Activated B cell treated with CpG ODN at 0.5 μM for 24 hours (primary cell): ENCODE measurements at regions of chr1 and their contacts with region 1.

Region 1: GRCh38 chr1:185317034-185317885 is at the start of gene IVNS1ABP:
- DNase-seq: peak; percentile 90
- ATAC-seq: peak; percentile 73
- H3K4me3 Mint-ChIP-seq: peak within 1 kb of the TSS; percentile 97
- H3K27ac Mint-ChIP-seq: peak within 1 kb of the TSS; percentile 98
- H3K4me1 Mint-ChIP-seq: peaks cover 49% of the 10 kb centered on the region
- H3K27me3 Mint-ChIP-seq: no peaks in the 10 kb centered on the region
- CTCF ChIP-seq: no peak
- total RNA-seq, gene IVNS1ABP: 130 and 149 TPM in 2 replicates

Region 2: GRCh38 chr1:184973272-184974055 is 343.8 kb before region 1 on chr1:
- CTCF ChIA-PET with region 1: no interaction called
- POLR2A ChIA-PET with region 1: no interaction called
- intact Hi-C with region 1: loop called (anchors 2 kb)
- DNase-seq: peak; percentile 61
- ATAC-seq: peak; percentile 51
- H3K4me3 Mint-ChIP-seq: peak overlapping the region; percentile 93
- H3K27ac Mint-ChIP-seq: peak overlapping the region; percentile 91
- H3K4me1 Mint-ChIP-seq: peaks cover 59% of the 10 kb centered on the region
- H3K27me3 Mint-ChIP-seq: peaks cover 2% of the 10 kb centered on the region
- CTCF ChIP-seq: no peak

Region 3: DNA sequence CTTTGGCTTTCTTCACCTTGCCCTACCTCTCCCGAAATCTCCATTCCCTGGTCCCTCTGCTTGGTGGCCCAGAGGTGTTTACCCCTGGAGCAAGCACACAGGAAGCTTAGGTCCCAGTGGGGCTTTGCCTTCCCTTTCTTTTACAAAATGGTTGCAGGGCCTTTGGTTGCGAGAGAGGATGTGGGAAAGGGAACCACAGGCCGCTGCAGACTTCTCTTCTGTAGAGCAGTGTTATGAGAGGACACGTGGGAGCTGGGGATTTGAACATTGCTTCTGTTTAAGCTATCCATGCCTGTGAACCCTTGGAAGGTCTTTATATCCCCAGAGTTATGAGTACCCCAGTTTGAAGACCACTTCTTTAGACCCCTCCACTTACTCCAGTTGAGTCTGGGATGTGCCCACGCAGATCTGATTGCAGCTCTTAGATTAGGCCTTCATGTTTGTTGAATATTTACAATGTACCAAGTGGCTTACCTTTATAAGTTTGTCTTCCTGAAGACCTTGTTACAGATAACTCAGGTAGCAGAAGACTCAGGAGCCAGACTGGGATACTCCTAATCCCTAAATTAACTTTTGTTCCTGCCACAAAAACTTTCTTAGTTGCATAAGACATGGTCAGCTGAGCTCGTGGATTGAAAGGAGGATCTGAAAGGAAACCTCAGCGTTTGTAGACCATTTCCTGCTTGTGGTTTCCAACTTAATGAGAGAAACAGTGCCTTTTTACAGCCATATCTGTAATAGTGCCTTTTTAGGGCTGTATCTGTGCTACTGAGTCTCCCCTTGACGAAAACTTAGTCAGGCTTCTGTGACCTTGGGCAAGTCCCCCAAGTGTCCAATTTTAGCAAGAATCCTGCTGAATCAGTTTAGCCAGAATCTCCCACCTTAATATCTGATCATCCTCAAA is 21.7 kb after region 1 on chr1:
- CTCF ChIA-PET with region 1: interaction called, 13 read pairs
- POLR2A ChIA-PET with region 1: interaction called, 73 read pairs
- intact Hi-C with region 1: loop called (anchors 1 kb)
- DNase-seq: no peak
- ATAC-seq: peak; percentile 85
- H3K4me3 Mint-ChIP-seq: peak overlapping the region; percentile 71
- H3K27ac Mint-ChIP-seq: peak overlapping the region; percentile 95
- H3K4me1 Mint-ChIP-seq: peaks cover 35% of the 10 kb centered on the region
- H3K27me3 Mint-ChIP-seq: no peaks in the 10 kb centered on the region
- CTCF ChIP-seq: no peak

Region 4: DNA sequence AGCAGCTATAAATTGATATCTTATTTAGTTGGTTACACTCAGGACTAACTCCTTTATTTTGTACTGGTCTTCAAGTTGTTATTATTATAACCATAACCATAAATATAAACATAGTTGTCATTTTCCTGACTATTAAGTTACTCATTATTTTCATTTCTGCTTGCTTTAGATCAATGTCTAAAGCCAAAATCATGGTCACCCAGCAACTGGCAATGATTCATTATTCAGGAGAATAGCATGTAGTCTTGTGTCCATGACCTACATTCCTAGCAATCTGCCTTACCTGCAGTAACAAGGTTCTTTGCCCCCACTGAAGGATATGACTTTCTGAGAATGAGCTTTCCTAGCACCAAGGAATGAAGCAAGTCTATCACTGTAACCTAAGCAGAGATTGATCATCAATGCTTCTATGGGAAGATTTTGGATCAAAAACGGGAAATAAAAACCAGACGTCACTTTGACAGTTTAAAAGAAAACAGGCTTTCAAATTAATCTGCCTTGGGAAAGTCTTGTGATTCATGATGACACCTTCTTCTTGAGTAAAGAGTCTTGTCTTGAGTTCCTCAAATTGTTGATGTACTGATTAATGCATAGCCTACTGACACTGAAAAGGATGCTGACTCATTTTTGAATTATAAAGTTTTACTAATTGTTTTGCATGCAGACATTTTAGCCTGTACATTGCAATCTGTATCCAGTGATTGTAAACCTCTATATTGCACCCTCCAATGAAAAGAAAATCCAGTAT is 203.1 kb after region 1 on chr1:
- CTCF ChIA-PET with region 1: interaction called, 3 read pairs
- POLR2A ChIA-PET with region 1: no interaction called
- intact Hi-C with region 1: loop called (anchors 10 kb)
- DNase-seq: no peak
- ATAC-seq: peak; percentile 49
- H3K4me3 Mint-ChIP-seq: no peak overlapping the region
- H3K27ac Mint-ChIP-seq: no peak overlapping the region
- H3K4me1 Mint-ChIP-seq: peaks cover 5% of the 10 kb centered on the region
- H3K27me3 Mint-ChIP-seq: no peaks in the 10 kb centered on the region
- CTCF ChIP-seq: no peak

Region 5: GRCh38 chr1:185595835-185596667 is 278.8 kb after region 1 on chr1:
- CTCF ChIA-PET with region 1: interaction called, 5 read pairs
- POLR2A ChIA-PET with region 1: interaction called, 33 read pairs
- intact Hi-C with region 1: loop called (anchors 1 kb)
- DNase-seq: no peak
- ATAC-seq: peak; percentile 73
- H3K4me3 Mint-ChIP-seq: no peak overlapping the region
- H3K27ac Mint-ChIP-seq: peak overlapping the region; percentile 26
- H3K4me1 Mint-ChIP-seq: peaks cover 38% of the 10 kb centered on the region
- H3K27me3 Mint-ChIP-seq: no peaks in the 10 kb centered on the region
- CTCF ChIP-seq: peak; percentile 55

Region 6: DNA sequence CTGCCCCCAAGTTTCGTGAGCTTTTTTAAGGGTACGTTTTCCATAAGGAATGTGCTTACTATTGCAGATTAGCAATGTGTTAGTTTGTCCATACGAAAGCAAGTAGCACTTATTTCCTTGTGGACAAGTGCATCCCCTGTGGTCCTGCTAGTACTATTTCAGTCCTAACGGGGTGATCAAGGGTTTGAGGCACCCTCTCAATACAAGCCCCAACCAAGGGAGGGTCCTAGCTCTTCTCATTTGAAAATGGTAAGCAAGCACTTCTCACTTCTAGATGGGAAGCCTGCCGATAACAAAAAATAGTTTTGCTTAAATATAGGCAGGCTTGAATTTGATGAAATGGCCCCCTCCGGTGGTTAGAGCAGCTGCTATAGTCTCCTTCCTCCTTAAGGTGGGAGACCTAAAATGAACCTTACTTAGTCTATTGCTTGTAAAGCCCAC is 352.9 kb after region 1 on chr1:
- CTCF ChIA-PET with region 1: interaction called, 49 read pairs
- POLR2A ChIA-PET with region 1: interaction called, 81 read pairs
- intact Hi-C with region 1: loop called (anchors 1 kb)
- DNase-seq: no peak
- ATAC-seq: peak; percentile 81
- H3K4me3 Mint-ChIP-seq: no peak overlapping the region
- H3K27ac Mint-ChIP-seq: peak overlapping the region; percentile 43
- H3K4me1 Mint-ChIP-seq: peaks cover 33% of the 10 kb centered on the region
- H3K27me3 Mint-ChIP-seq: no peaks in the 10 kb centered on the region
- CTCF ChIP-seq: no peak

Region 7: DNA sequence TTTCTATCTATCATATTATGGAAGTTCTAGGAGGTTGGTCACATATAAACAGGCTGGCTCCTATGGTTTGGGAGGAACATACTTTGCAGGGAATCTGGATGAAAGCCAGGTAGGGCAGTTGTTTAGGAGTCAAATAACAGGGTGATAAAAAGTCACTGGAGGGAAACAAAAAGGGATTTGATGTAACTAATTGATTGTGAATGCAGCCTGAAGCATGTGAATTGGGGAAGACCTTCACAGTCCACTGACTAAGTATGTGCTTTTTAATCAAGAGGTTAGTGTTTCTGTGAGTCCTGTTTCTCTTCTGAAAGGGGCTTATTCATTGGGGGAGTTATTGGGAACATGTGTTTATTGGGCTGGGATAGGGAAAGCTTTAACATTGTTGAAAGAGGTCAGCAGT is 458.2 kb after region 1 on chr1:
- CTCF ChIA-PET with region 1: no interaction called
- POLR2A ChIA-PET with region 1: no interaction called
- intact Hi-C with region 1: no loop called
- DNase-seq: no peak
- ATAC-seq: no peak
- H3K4me3 Mint-ChIP-seq: no peak overlapping the region
- H3K27ac Mint-ChIP-seq: no peak overlapping the region
- H3K4me1 Mint-ChIP-seq: no peaks in the 10 kb centered on the region
- H3K27me3 Mint-ChIP-seq: peaks cover 2% of the 10 kb centered on the region
- CTCF ChIP-seq: no peak

Region 8: GRCh38 chr1:186420923-186421322 is 1103.7 kb after region 1 on chr1:
- CTCF ChIA-PET with region 1: no interaction called
- POLR2A ChIA-PET with region 1: no interaction called
- intact Hi-C with region 1: no loop called
- DNase-seq: no peak
- ATAC-seq: no peak
- H3K4me3 Mint-ChIP-seq: no peak overlapping the region
- H3K27ac Mint-ChIP-seq: no peak overlapping the region
- H3K4me1 Mint-ChIP-seq: no peaks in the 10 kb centered on the region
- H3K27me3 Mint-ChIP-seq: no peaks in the 10 kb centered on the region
- CTCF ChIP-seq: no peak